Activated B cell treated with CpG ODN at 0.5 μM for 24 hours (primary cell): ENCODE measurements at regions of chr7 and their contacts with region 1.

Region 1: GRCh38 chr7:20199015-20199737 is 18.0 kb downstream of the MACC1 start:
- DNase-seq: peak; percentile 29
- ATAC-seq: peak; percentile 81
- H3K4me3 Mint-ChIP-seq: peak overlapping the region; percentile 69
- H3K27ac Mint-ChIP-seq: peak overlapping the region; percentile 94
- H3K4me1 Mint-ChIP-seq: peaks cover 55% of the 10 kb centered on the region
- H3K27me3 Mint-ChIP-seq: no peaks in the 10 kb centered on the region
- CTCF ChIP-seq: no peak

Region 2: GRCh38 chr7:20172736-20173334 is 26.3 kb before region 1 on chr7:
- CTCF ChIA-PET with region 1: interaction called, 8 read pairs
- POLR2A ChIA-PET with region 1: no interaction called
- intact Hi-C with region 1: loop called (anchors 2 kb)
- DNase-seq: peak; percentile 27
- ATAC-seq: peak; percentile 61
- H3K4me3 Mint-ChIP-seq: no peak overlapping the region
- H3K27ac Mint-ChIP-seq: no peak overlapping the region
- H3K4me1 Mint-ChIP-seq: peaks cover 11% of the 10 kb centered on the region
- H3K27me3 Mint-ChIP-seq: no peaks in the 10 kb centered on the region
- CTCF ChIP-seq: no peak

Region 3: DNA sequence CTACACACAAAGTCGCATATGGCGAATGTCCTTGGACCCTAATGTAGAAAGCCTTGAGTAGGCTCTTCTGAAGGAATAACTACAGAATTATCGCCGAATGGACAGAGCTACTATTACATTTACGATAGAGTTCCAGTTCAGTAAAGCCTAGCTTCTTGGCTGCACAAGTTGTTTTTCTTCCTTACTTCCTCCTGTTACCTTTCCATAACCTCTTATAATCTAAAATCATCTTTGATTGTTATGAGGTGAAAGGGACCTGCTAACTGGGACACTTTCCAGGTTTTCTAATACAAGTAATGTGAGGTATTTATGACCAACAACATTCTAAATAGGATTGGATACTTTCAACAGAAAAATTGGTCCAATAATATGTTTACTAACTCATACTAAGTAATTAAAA is 13.2 kb before region 1 on chr7:
- CTCF ChIA-PET with region 1: interaction called, 3 read pairs
- POLR2A ChIA-PET with region 1: interaction called, 4 read pairs
- intact Hi-C with region 1: loop called (anchors 2 kb)
- DNase-seq: no peak
- ATAC-seq: no peak
- H3K4me3 Mint-ChIP-seq: no peak overlapping the region
- H3K27ac Mint-ChIP-seq: no peak overlapping the region
- H3K4me1 Mint-ChIP-seq: peaks cover 26% of the 10 kb centered on the region
- H3K27me3 Mint-ChIP-seq: no peaks in the 10 kb centered on the region
- CTCF ChIP-seq: no peak

Region 4: GRCh38 chr7:20267482-20267881 is 68.3 kb after region 1 on chr7:
- CTCF ChIA-PET with region 1: no interaction called
- POLR2A ChIA-PET with region 1: no interaction called
- intact Hi-C with region 1: no loop called
- DNase-seq: peak; percentile 21
- ATAC-seq: peak; percentile 56
- H3K4me3 Mint-ChIP-seq: no peak overlapping the region
- H3K27ac Mint-ChIP-seq: no peak overlapping the region
- H3K4me1 Mint-ChIP-seq: peaks cover 9% of the 10 kb centered on the region
- H3K27me3 Mint-ChIP-seq: no peaks in the 10 kb centered on the region
- CTCF ChIP-seq: no peak